ENCODE measurements at regions of chr7 and their contacts with region 1.

Region 1: GRCh38 chr7:111735661-111736551 is 173.6 kb upstream of the IMMP2L start:
- DNase-seq: peak; percentile 61
- ATAC-seq: peak; percentile 44
- H3K4me3 Mint-ChIP-seq: no peak overlapping the region
- H3K27ac Mint-ChIP-seq: no peak overlapping the region
- H3K4me1 Mint-ChIP-seq: no peaks in the 10 kb centered on the region
- H3K27me3 Mint-ChIP-seq: peaks cover 4% of the 10 kb centered on the region

Region 2: DNA sequence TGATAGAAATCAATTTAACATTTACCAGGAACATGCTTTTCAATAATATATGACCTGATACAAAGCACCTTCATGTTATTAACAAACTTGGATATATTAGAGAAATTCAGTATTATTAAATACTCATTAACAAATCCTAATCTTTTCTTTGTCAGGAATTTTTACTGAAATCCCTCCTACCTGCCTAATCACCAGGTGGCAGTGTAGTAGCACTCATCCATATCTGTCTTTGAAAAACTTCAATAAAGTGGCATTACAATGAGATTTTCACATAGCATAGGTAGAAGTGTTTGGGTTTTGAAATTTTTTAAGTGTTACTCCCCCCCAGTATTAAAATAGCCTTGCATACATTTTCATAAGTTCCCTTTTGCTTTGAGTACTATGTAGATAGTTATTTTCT is 1891.5 kb before region 1 on chr7:
- CTCF ChIA-PET with region 1: no interaction called
- POLR2A ChIA-PET with region 1: no interaction called
- intact Hi-C with region 1: loop called in 1 of 2 experiments (anchors 2 kb)
- DNase-seq: no peak
- ATAC-seq: no peak
- H3K4me3 Mint-ChIP-seq: no peak overlapping the region
- H3K27ac Mint-ChIP-seq: no peak overlapping the region
- H3K4me1 Mint-ChIP-seq: no peaks in the 10 kb centered on the region
- H3K27me3 Mint-ChIP-seq: no peaks in the 10 kb centered on the region

Region 3: GRCh38 chr7:110090110-110090769 is 1645.7 kb before region 1 on chr7:
- CTCF ChIA-PET with region 1: no interaction called
- POLR2A ChIA-PET with region 1: no interaction called
- intact Hi-C with region 1: loop called in 1 of 2 experiments (anchors 10 kb)
- DNase-seq: no peak
- ATAC-seq: no peak
- H3K4me3 Mint-ChIP-seq: no peak overlapping the region
- H3K27ac Mint-ChIP-seq: no peak overlapping the region
- H3K4me1 Mint-ChIP-seq: no peaks in the 10 kb centered on the region
- H3K27me3 Mint-ChIP-seq: peaks cover 3% of the 10 kb centered on the region

Region 4: DNA sequence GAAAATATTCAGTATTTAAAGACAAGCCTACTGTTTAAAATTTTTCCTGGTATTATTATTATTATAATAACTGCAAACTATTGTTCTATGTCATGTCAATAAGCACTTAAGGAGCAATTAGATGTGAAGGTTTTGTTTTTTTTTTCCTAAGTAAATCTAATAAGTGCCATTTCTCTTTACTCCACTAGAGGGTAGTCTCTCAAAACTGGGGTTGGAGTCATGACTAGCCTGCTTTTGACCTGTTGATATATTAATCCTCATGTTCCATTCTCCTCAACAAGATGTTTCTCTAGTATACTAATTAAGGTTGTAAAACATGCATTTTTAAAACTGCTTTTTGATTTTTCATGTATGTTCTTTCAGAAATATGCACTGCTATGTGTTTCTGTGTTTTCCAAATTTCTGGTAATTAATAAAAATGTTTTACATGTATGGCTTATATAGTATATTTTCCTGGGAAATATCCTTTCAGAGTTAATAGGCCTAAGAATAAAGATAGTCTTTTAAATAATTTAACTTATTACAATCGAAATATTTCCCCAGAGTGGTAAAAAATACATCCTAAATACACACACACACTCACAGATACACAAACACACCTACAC is 646.0 kb before region 1 on chr7:
- CTCF ChIA-PET with region 1: no interaction called
- POLR2A ChIA-PET with region 1: no interaction called
- intact Hi-C with region 1: loop called (anchors 2 to 5 kb)
- DNase-seq: no peak
- ATAC-seq: no peak
- H3K4me3 Mint-ChIP-seq: no peak overlapping the region
- H3K27ac Mint-ChIP-seq: peak overlapping the region; percentile 80
- H3K4me1 Mint-ChIP-seq: peaks cover 86% of the 10 kb centered on the region
- H3K27me3 Mint-ChIP-seq: no peaks in the 10 kb centered on the region

Region 5: GRCh38 chr7:111650412-111650999 is 85.4 kb before region 1 on chr7:
- CTCF ChIA-PET with region 1: no interaction called
- POLR2A ChIA-PET with region 1: no interaction called
- intact Hi-C with region 1: loop called in 1 of 2 experiments (anchors 2 kb)
- DNase-seq: no peak
- ATAC-seq: no peak
- H3K4me3 Mint-ChIP-seq: no peak overlapping the region
- H3K27ac Mint-ChIP-seq: no peak overlapping the region
- H3K4me1 Mint-ChIP-seq: no peaks in the 10 kb centered on the region
- H3K27me3 Mint-ChIP-seq: peaks cover 6% of the 10 kb centered on the region

Measured in activated CD4-positive, alpha-beta T cell treated with anti-CD3 and anti-CD28 coated beads for 36 hours (primary cell).